ENCODE measurements at regions of chr5 and their contacts with region 1.

Region 1: GRCh38 chr5:39948867-39949468 is 524.2 kb upstream of the DAB2 start:
- DNase-seq: peak; percentile 49 to 64
- ATAC-seq: peak; percentile 89

Region 2: DNA sequence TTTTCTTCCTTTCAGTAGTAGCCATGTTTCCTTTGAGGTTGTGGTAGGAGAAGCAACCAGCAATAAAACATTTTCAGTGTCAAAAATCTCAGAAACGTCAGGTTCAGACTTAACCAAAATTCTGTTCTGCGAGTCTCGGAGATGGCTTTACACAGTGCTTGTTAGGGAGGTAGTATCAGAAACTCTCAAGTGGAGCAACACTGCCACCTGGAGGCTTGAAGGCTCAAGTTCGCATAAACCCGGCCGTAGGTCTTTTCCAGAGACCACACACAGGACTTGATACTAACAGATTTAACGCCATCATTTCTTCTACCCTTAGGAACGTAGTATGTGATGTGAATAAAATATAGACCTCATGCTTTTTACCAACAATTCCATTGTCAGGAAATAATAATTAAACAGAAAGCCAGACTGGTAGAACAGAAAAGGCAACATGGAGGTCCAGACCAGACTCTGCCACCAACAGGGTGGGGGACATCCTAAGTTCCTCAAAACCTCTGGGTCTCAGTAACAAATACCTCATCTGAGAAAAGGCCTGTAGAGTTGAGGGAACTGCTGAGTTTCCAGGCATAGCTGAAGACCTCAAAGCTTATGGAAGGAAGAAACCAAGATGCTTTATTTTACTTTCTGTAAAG is 739.3 kb after region 1 on chr5:
- intact Hi-C with region 1: loop called in 1 of 2 experiments (anchors 5 kb)
- DNase-seq: peak; percentile 73 to 90
- ATAC-seq: peak; percentile 77